ENCODE measurements at regions of chr5 and their contacts with region 1.

Region 1: DNA sequence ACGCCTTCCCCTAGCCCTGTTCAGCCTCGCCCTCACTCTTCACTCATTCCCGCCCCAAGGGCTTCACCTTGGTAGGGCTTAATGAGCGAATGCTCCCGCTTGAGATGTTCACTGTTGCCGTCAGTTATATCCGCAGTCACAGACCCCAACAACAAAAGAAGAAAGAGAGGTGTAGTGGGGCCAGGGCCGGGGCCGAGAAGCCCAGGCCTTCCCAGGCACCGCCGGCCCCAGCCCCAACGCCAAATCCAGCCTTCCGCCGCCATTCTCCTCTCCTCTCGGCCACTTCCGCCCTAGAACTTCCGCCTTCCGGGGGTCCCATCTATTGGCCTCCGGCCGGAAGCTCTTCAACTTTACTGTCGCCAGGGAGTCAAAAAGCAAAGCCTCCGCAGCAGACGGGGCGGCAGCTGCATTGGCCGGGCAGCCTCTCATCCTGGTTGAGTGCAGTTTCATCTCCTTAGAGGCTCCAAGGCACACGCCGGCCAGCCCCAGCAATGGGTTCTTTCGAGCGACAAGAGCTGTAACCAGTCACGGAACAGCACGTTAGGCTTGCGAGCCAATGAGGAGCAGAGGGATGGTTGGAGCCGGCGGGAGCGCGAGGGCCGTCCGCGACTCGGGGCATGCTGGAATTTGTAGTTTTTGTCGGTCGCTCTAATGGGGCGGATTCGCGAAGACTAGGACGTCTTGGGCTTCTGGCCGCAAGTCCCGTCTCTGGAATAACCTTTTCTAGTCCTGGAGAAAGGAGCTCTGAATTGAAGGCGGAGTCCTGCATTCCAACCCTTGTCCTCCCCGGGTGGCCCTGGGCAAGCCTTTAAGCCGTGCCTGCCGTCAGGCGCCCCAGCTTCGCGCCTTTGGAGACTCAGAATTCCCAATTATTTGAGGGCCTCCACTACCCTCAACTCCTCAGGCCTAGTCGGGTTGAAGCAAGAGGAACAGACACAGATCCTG is at the start of gene LMAN2:
- DNase-seq: peak; percentile 76 to 96
- H3K4me3 ChIP-seq: peak within 1 kb of the TSS; percentile 68 to 71
- H3K27ac ChIP-seq: peak within 1 kb of the TSS; percentile 81 to 94
- H3K4me1 ChIP-seq: peaks cover 7 to 24% of the 10 kb centered on the region in 2 donors
- H3K27me3 ChIP-seq: no peaks in the 10 kb centered on the region
- CTCF ChIP-seq: no peak
- total RNA-seq, gene LMAN2: 229 TPM

Region 2: DNA sequence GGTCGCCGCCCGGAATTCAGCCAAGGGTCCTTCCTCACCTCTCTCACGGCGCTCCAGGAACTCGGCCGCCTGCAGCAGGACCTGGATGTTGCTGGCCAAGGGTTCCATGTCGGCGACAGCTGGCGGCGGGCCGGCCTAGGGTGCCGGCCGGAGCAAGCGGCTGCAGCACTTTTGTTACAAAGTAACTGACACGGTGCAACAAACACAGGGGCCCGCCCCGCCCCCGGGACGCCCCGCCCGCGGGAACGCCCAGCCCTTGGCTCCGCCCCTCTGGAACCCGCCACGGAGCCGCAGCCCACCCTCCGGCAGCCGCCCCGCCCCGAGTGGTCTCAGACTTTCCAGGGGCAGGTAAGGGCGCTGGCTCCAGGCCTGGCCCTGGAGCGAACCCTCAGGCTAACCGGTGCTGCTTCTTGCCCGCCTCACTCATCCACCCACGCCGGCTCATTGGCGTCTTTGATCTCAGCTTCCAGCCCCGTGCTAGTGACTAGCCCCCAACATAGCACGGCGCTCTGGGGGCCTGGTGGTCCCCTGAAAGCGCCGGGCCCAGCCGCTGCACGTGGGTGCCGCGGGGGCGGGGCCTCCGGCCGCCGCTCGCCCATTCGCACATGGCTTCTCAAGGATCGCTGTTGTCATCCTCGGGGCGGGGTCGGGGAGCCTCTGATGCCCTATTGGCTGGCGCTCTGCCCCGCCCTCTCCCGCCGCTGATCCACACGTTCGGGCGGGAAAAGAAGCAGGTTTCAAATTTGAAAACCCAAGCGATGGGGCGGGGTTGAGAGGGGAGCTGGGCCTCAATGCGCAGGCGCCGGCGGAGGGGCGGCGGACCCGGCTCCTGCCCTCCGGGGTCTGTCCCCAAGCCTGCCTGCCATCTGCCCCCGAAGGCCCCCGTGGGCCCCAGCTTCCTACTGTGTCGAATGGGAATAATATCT is 39.7 kb before region 1 on chr5 and contains the start of gene MXD3:
- intact Hi-C with region 1: loop called (anchors 2 kb)
- DNase-seq: peak; percentile 88 to 98
- H3K4me3 ChIP-seq: peak within 1 kb of the TSS; percentile 57 to 66
- H3K27ac ChIP-seq: no peak within 1 kb of the TSS
- H3K4me1 ChIP-seq: peaks cover 12 to 18% of the 10 kb centered on the region in 2 donors
- H3K27me3 ChIP-seq: no peaks in the 10 kb centered on the region
- CTCF ChIP-seq: no peak
- total RNA-seq, gene MXD3: 13.5 TPM

Region 3: GRCh38 chr5:177366528-177367322 is 15.1 kb after region 1 on chr5:
- intact Hi-C with region 1: loop called (anchors 1 kb)
- DNase-seq: peak; percentile 63 to 94
- H3K4me3 ChIP-seq: peak overlapping the region; percentile 41 to 62
- H3K27ac ChIP-seq: peak overlapping the region; percentile 71 to 78
- H3K4me1 ChIP-seq: peaks cover 7 to 18% of the 10 kb centered on the region in 2 donors
- H3K27me3 ChIP-seq: no peaks in the 10 kb centered on the region
- CTCF ChIP-seq: no peak

Region 4: GRCh38 chr5:177389241-177390169 is 37.8 kb after region 1 on chr5:
- intact Hi-C with region 1: no loop called
- DNase-seq: peak in 1 of 2 donors; percentile 73
- H3K4me3 ChIP-seq: no peak overlapping the region
- H3K27ac ChIP-seq: no peak overlapping the region
- H3K4me1 ChIP-seq: no peaks in the 10 kb centered on the region
- H3K27me3 ChIP-seq: no peaks in the 10 kb centered on the region
- CTCF ChIP-seq: no peak

Measured in ascending aorta (tissue), 2 donors.